Endothelial cell of umbilical vein (primary cell): ENCODE measurements at regions of chr17 and their contacts with region 1.

Region 1: GRCh38 chr17:46044286-46044928 is 45.4 kb downstream of the STH start:
- DNase-seq: peak; percentile 93
- H3K4me3 ChIP-seq: no peak overlapping the region
- H3K27ac ChIP-seq: no peak overlapping the region
- H3K4me1 ChIP-seq: peaks cover 9% of the 10 kb centered on the region
- H3K27me3 ChIP-seq: no peaks in the 10 kb centered on the region
- CTCF ChIP-seq: peak; percentile 79 to 83
- POLR2A ChIP-seq: no peak

Region 2: GRCh38 chr17:45914047-45914717 is 130.2 kb before region 1 on chr17:
- CTCF ChIA-PET with region 1: no interaction called
- POLR2A ChIA-PET with region 1: no interaction called
- dilution Hi-C with region 1: no loop called
- intact Hi-C with region 1: no loop called
- DNase-seq: no peak
- H3K4me3 ChIP-seq: no peak overlapping the region
- H3K27ac ChIP-seq: no peak overlapping the region
- H3K4me1 ChIP-seq: no peaks in the 10 kb centered on the region
- H3K27me3 ChIP-seq: peaks cover 2 to 4% of the 10 kb centered on the region in 2 experiments
- CTCF ChIP-seq: no peak
- POLR2A ChIP-seq: no peak

Region 3: GRCh38 chr17:45942284-45942683 is 102.1 kb before region 1 on chr17:
- CTCF ChIA-PET with region 1: no interaction called
- POLR2A ChIA-PET with region 1: no interaction called
- dilution Hi-C with region 1: no loop called
- intact Hi-C with region 1: no loop called
- DNase-seq: no peak
- H3K4me3 ChIP-seq: no peak overlapping the region
- H3K27ac ChIP-seq: no peak overlapping the region
- H3K4me1 ChIP-seq: no peaks in the 10 kb centered on the region
- H3K27me3 ChIP-seq: peaks cover 8 to 13% of the 10 kb centered on the region in 2 experiments
- CTCF ChIP-seq: no peak
- POLR2A ChIP-seq: no peak

Region 4: DNA sequence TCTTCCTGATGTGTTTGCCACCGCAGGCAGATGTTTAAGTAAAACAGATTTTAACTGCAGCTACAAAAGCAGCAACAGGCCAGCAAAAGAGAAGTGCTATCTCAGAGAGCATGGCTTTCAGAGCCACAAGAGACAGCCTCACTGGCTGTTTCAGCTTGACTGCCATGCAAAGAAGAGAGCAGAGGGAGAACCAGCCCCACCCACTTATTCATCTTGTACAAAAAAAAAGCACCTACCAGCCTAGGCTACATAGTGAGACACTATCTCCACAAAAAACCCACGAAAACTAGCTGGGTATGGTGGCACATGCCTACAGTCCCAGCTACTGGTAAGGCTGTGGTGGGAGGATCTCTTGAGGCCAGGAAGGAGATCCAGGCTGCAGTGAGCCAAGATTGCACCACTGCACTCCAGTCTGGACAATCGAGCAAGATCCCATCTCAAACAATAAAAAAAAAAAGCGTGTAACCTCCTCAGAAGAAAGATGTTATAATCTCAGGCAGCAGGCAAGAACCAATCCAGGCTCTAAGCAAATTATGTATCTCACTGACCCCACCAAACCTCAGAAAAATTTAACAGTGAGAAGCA is 15.3 kb before region 1 on chr17:
- CTCF ChIA-PET with region 1: interaction called, 19 read pairs
- POLR2A ChIA-PET with region 1: no interaction called
- dilution Hi-C with region 1: no loop called
- intact Hi-C with region 1: no loop called
- DNase-seq: no peak
- H3K4me3 ChIP-seq: no peak overlapping the region
- H3K27ac ChIP-seq: no peak overlapping the region
- H3K4me1 ChIP-seq: no peaks in the 10 kb centered on the region
- H3K27me3 ChIP-seq: no peaks in the 10 kb centered on the region
- CTCF ChIP-seq: no peak
- POLR2A ChIP-seq: no peak

Region 5: GRCh38 chr17:46078675-46079074 is 34.3 kb after region 1 on chr17:
- CTCF ChIA-PET with region 1: interaction called, 13 read pairs
- POLR2A ChIA-PET with region 1: no interaction called
- dilution Hi-C with region 1: no loop called
- intact Hi-C with region 1: no loop called
- DNase-seq: no peak
- H3K4me3 ChIP-seq: no peak overlapping the region
- H3K27ac ChIP-seq: no peak overlapping the region
- H3K4me1 ChIP-seq: peaks cover under 1% of the 10 kb centered on the region
- H3K27me3 ChIP-seq: no peaks in the 10 kb centered on the region
- CTCF ChIP-seq: no peak
- POLR2A ChIP-seq: no peak

Region 6: GRCh38 chr17:46179375-46179999 is 135.1 kb after region 1 on chr17:
- CTCF ChIA-PET with region 1: interaction called, 52 read pairs
- POLR2A ChIA-PET with region 1: no interaction called
- dilution Hi-C with region 1: no loop called
- intact Hi-C with region 1: no loop called
- DNase-seq: no peak
- H3K4me3 ChIP-seq: no peak overlapping the region
- H3K27ac ChIP-seq: no peak overlapping the region
- H3K4me1 ChIP-seq: no peaks in the 10 kb centered on the region
- H3K27me3 ChIP-seq: no peaks in the 10 kb centered on the region
- CTCF ChIP-seq: no peak
- POLR2A ChIP-seq: no peak

Region 7: DNA sequence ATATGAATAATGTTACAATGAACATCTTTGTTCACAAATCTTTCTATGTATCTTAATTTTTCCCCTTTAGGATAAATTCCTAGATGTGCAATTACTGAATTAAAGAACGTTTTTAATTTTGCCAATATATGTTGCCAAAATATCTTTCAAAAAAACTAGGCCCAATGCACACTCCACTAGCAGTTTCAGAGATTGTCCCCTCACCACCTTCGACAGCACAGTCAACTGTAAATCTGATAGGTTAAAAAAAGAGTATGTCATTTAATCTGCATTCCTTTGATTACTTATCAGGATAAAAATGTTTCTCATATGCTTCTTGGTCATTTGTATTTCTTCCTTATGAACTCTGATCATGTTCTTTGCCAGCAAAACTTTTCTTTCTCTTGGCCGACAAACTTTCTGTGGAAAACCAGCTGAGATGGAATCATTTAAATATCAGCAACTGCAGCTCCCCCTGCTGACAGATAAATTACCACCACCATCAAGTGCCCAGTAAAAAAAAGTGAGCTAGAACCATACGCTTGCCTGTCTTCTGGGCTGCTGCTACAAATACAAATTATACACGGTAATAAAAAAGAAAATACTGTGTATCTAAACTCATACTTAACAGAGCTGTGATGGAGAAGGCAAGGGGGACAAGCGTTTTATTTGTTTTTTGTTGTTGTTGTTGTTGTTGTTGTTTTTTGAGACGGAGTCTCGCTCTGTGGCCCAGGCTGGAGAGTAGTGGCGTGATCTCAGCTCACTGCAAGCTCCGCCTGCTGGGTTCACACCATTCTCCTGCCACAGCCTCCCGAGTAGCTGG is 168.4 kb after region 1 on chr17:
- CTCF ChIA-PET with region 1: interaction called, 131 read pairs
- POLR2A ChIA-PET with region 1: interaction called, 3 read pairs
- dilution Hi-C with region 1: no loop called
- intact Hi-C with region 1: loop called (anchors 1 kb)
- DNase-seq: peak; percentile 83
- H3K4me3 ChIP-seq: no peak overlapping the region
- H3K27ac ChIP-seq: no peak overlapping the region
- H3K4me1 ChIP-seq: no peaks in the 10 kb centered on the region
- H3K27me3 ChIP-seq: no peaks in the 10 kb centered on the region
- CTCF ChIP-seq: peak; percentile 63 to 71
- POLR2A ChIP-seq: no peak